Right cardiac atrium (tissue), 5 donors: ENCODE measurements at regions of chr15 and their contacts with region 1.

Region 1: DNA sequence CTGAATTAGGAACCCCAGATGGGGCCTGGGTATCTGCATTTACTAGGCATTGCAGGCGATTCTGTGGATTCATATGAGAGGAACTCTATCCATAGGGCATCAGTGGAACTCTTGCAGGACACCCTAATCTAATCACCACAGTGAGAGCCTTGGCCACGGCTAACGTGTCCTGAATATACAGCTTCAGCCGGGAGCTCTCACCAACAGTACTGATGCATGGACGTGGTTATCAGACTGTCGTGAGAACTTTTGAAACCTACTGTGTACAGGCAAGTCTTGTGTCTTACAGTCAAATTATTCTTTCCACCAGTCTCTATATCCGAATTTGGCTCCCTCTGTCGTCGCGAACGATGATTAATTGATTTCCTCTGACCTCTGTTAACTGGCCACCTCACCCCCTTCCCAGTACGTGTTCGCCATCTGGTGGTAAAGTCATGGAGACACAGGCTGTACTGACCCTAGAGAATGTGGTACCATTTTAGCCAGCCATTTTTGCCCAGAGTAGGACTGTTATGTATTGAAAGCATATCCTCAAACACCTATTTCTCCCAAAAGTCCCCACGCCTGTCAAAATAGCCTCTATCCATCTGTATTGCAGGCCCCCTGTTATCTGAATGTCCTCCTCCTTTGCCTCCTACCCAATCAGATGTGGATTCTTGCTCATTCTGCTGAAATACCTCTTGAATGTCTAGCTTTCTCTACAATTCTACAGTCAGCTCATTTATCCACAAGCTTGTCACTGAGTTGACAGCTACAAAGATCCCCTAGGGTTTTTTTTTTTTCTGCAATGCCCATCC is 39.7 kb downstream of the GLDN start:
- DNase-seq: peak; percentile 57 to 67 (median 58)
- ATAC-seq: peak; percentile 91 to 95
- H3K4me3 ChIP-seq: no peak overlapping the region
- H3K27ac ChIP-seq: no peak overlapping the region
- H3K4me1 ChIP-seq: no peaks in the 10 kb centered on the region
- H3K27me3 ChIP-seq: no peaks in the 10 kb centered on the region

Region 2: GRCh38 chr15:51162865-51163762 is 218.1 kb before region 1 on chr15:
- intact Hi-C with region 1: loop called in 1 of 4 experiments (anchors 5 kb)
- DNase-seq: peak; percentile 63 to 87 (median 78)
- ATAC-seq: peak; percentile 87 to 92
- H3K4me3 ChIP-seq: no peak overlapping the region
- H3K27ac ChIP-seq: no peak overlapping the region
- H3K4me1 ChIP-seq: no peaks in the 10 kb centered on the region
- H3K27me3 ChIP-seq: no peaks in the 10 kb centered on the region

Region 3: GRCh38 chr15:51227940-51228783 is 153.0 kb before region 1 on chr15:
- intact Hi-C with region 1: loop called in 2 of 4 experiments (anchors 5 to 10 kb)
- DNase-seq: peak in 2 of 3 donors; percentile 19 to 47
- ATAC-seq: peak; percentile 47 to 80
- H3K4me3 ChIP-seq: no peak overlapping the region
- H3K27ac ChIP-seq: no peak overlapping the region
- H3K4me1 ChIP-seq: no peaks in the 10 kb centered on the region
- H3K27me3 ChIP-seq: no peaks in the 10 kb centered on the region

Region 4: GRCh38 chr15:51281368-51281967 is 99.7 kb before region 1 on chr15:
- intact Hi-C with region 1: loop called (anchors 1 to 2 kb)
- DNase-seq: peak; percentile 75 to 87 (median 87)
- ATAC-seq: peak; percentile 91 to 95
- H3K4me3 ChIP-seq: no peak overlapping the region
- H3K27ac ChIP-seq: no peak overlapping the region
- H3K4me1 ChIP-seq: no peaks in the 10 kb centered on the region
- H3K27me3 ChIP-seq: no peaks in the 10 kb centered on the region